Thyroid gland (tissue), 4 donors: ENCODE measurements at regions of chr10 and their contacts with region 1.

Region 1: DNA sequence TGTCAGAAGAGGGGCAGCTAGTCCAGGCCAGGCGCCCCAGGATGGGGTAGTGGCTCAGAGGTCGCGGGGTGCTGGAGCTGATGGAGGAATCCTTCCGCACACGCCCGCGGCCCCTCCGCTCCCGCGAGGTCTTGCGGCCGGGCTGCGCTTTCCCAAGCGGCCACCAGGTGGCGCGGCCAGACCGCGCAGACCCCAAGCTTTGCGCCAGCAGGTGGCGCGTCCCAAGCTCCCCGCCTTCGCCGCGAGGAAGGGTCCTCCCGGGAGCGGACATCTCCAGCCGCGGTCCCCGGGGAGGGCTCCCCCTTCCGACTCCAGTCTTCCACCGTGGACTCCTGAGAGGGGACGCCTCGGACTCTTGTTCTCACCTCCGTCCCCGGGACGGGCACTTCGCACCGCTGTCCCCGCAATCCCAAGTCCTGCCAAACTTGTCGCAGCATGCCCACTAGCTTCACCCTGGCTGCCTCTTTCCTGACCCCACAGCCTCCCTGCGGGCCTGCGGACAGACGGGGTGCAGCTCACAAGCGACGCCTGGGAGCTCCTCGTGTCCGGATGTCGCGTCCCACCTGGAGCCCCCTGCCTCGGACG is 19.4 kb downstream of the KCNK18 start:
- DNase-seq: peak; percentile 59 to 65
- H3K4me3 ChIP-seq: peak overlapping the region in 2 of 3 donors; percentile 22 to 32
- H3K27ac ChIP-seq: no peak overlapping the region
- H3K4me1 ChIP-seq: peaks cover 6 to 12% of the 10 kb centered on the region in 2 donors
- H3K27me3 ChIP-seq: no peaks in the 10 kb centered on the region
- CTCF ChIP-seq: peak; percentile 95 to 100 (median 99)
- POLR2A ChIP-seq: no peak

Region 2: DNA sequence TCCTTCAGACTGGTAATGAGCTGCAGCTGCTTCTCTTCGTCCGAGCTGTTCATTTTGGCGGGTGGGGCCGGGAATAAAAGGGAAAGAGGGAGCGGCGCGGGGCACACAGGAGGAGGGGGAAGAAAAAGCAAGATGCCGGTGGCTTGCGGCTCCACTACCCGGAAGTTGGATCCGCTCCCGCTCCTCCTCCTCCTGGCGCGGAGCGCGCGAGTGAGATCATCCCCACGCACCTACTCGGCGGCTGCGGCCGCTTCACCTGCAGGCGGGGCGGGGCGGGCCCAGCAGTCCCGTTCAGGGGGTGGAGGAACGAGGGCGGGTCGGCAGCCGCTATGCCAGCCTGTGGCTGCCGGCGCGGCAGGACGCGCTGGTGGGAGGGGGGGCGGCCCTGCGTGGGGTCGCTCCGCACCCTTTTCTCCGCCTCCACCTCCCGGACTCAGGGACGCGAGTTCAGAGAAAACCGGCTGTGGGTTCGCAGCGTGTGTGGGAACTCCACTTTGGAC is 211.6 kb before region 1 on chr10 and contains the start of gene SHTN1:
- intact Hi-C with region 1: no loop called
- DNase-seq: peak; percentile 93 to 95
- H3K4me3 ChIP-seq: peak within 1 kb of the TSS; percentile 50 to 80 (median 67)
- H3K27ac ChIP-seq: peak within 1 kb of the TSS; percentile 78 to 86 (median 84)
- H3K4me1 ChIP-seq: peaks cover 0 to 7% of the 10 kb centered on the region in 2 donors
- H3K27me3 ChIP-seq: no peaks in the 10 kb centered on the region
- CTCF ChIP-seq: no peak
- POLR2A ChIP-seq: peak in 1 of 2 donors; percentile 87
- total RNA-seq, gene SHTN1: 31.6 to 103 (median 37.7) TPM

Region 3: GRCh38 chr10:117143103-117143823 is 73.4 kb before region 1 on chr10:
- intact Hi-C with region 1: no loop called
- DNase-seq: no peak
- H3K4me3 ChIP-seq: no peak overlapping the region
- H3K27ac ChIP-seq: no peak overlapping the region
- H3K4me1 ChIP-seq: peaks cover 3 to 6% of the 10 kb centered on the region in 2 donors
- H3K27me3 ChIP-seq: peaks cover 20% of the 10 kb centered on the region
- CTCF ChIP-seq: no peak
- POLR2A ChIP-seq: no peak

Region 4: DNA sequence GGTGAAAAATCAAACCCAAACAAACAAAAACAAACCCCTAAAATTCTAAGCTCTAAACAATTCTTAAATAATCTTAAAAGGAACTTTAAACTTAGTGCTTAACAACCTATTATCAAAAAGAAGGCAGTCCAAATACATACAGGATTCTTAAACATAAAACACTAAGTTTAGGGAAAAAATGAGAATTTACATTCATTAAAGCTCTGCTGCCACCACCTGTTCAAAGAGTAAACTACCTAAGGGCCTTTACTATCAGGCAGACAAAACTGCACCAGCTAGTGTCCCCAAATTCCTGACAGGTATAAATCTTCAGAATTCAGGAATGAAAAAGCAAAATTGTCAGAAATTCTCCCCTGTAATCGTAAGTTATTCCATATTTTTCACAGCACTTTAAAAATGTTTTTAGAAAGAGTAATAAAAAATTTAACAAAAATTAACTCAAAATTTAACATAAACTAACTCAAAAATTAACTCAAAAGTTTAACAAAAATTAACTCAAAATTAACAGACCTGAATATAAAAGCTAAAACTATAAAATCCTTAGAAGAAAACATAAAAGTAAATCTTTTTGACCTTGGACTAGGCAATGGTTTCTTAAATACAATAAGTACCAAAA is 103.5 kb after region 1 on chr10:
- intact Hi-C with region 1: loop called (anchors 5 kb)
- DNase-seq: no peak
- H3K4me3 ChIP-seq: no peak overlapping the region
- H3K27ac ChIP-seq: no peak overlapping the region
- H3K4me1 ChIP-seq: peaks cover 11 to 13% of the 10 kb centered on the region in 2 donors
- H3K27me3 ChIP-seq: no peaks in the 10 kb centered on the region
- CTCF ChIP-seq: peak in 4 of 6 experiments; percentile 16 to 70 (median 66)
- POLR2A ChIP-seq: no peak

Region 5: DNA sequence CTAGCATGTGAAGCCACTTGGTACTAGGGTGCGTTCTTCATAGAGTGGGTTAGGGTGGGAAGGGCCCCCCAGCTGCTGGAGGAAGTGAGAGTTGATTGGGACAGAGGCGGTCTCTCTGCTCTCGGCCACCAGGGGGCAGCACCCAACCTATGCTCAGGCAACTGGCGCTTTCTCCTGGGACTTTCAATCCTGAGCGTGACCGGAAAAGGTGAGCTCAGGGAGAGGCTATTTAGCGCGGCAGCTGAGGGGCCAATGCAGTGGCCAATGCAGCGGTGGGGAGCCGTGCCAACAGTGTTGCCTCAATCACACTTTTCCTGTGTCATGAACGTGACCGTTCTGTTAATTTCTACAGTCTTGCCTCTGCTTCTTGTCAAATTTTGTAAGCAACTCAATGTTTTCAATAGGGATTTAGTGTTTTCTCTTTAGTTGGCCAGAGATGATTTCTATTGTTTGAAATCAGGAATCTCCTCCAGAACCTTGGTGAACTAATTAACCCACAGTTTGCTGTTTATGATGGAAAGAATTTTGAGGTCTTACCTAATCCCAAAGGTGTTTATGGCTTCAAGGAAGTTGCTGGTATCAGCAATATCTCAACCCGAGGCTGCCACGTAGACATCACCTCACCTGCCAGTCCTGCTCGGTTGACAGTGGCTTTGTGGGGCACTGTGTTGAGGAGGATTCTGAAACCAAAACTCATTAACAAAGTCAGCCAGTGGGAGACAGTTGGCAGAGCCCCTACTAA is 226.4 kb after region 1 on chr10:
- intact Hi-C with region 1: loop called (anchors 10 kb)
- DNase-seq: peak; percentile 77 to 81
- H3K4me3 ChIP-seq: no peak overlapping the region
- H3K27ac ChIP-seq: no peak overlapping the region
- H3K4me1 ChIP-seq: peaks cover 0 to 6% of the 10 kb centered on the region in 2 donors
- H3K27me3 ChIP-seq: no peaks in the 10 kb centered on the region
- CTCF ChIP-seq: peak; percentile 47 to 93 (median 62)
- POLR2A ChIP-seq: no peak

Region 6: GRCh38 chr10:117884093-117884492 is 667.4 kb after region 1 on chr10:
- intact Hi-C with region 1: no loop called
- DNase-seq: no peak
- H3K4me3 ChIP-seq: no peak overlapping the region
- H3K27ac ChIP-seq: no peak overlapping the region
- H3K4me1 ChIP-seq: no peaks in the 10 kb centered on the region
- H3K27me3 ChIP-seq: no peaks in the 10 kb centered on the region
- CTCF ChIP-seq: no peak
- POLR2A ChIP-seq: no peak